SK-N-SH (cell line): ENCODE measurements at regions of chr1 and their contacts with region 1.

Region 1: DNA sequence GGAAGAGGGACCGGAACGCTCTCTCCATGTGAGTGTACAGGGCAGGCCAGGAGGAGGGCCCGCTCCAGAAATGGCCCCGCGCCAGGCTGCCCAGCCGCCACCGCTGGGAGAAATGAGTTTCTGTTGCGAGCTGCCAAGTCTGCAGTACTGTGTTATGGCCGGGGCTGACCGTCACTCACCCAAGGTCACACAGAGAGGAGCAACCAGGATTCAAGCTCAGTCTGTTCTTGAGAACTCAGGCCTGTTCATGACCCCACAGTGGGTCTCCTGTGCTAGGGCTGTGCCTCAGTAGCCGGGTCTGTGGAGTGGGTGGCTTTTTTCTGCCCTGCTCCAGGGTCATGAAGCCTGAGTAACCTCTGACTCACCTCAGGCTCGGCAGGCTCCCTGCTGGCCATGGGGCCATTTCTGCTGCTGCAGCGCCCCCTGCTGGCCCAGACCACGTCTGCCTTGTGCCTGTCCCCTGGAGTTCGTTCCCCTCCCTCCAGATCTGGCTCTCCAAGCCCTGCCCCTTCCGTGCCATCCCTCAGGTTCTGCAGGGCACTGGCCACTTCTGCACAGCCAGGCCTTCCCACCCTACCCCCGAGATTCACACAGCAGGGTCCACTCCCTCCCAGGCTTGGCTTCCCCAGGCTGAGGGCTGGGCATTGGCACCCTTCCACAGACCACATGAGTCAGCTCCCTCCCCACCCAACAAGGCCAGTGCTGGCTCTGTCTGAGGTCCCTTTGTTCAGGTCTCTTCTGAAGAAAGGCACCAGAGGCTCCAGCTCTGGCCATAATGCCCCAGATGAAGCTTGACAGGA is 51.8 kb downstream of the EDN2 start:
- DNase-seq: peak; percentile 90
- H3K4me3 ChIP-seq: peak overlapping the region; percentile 25 to 58; a peak in 3 of 4 replicates
- H3K27ac ChIP-seq: peak overlapping the region; percentile 85 to 88
- H3K4me1 ChIP-seq: peaks cover 36 to 65% of the 10 kb centered on the region in 2 experiments
- H3K27me3 ChIP-seq: no peaks in the 10 kb centered on the region
- CTCF ChIP-seq: peak; percentile 98
- EP300 ChIP-seq: peak in 1 of 2 experiments; percentile 75; a peak in 1 of 4 replicates
- RAD21 ChIP-seq: peak; percentile 89

Region 2: GRCh38 chr1:41282679-41283317 is 149.9 kb before region 1 on chr1:
- CTCF ChIA-PET with region 1: interaction called, 46 read pairs
- POLR2A ChIA-PET with region 1: no interaction called
- DNase-seq: peak; percentile 78
- H3K4me3 ChIP-seq: no peak overlapping the region; a peak in 1 of 4 replicates
- H3K27ac ChIP-seq: no peak overlapping the region
- H3K4me1 ChIP-seq: peaks cover 0 to 2% of the 10 kb centered on the region in 2 experiments; a peak in 1 of 4 replicates
- H3K27me3 ChIP-seq: no peaks in the 10 kb centered on the region; the same call in 1 of the 2 replicates
- CTCF ChIP-seq: peak; percentile 94
- EP300 ChIP-seq: no peak
- RAD21 ChIP-seq: peak; percentile 83

Region 3: DNA sequence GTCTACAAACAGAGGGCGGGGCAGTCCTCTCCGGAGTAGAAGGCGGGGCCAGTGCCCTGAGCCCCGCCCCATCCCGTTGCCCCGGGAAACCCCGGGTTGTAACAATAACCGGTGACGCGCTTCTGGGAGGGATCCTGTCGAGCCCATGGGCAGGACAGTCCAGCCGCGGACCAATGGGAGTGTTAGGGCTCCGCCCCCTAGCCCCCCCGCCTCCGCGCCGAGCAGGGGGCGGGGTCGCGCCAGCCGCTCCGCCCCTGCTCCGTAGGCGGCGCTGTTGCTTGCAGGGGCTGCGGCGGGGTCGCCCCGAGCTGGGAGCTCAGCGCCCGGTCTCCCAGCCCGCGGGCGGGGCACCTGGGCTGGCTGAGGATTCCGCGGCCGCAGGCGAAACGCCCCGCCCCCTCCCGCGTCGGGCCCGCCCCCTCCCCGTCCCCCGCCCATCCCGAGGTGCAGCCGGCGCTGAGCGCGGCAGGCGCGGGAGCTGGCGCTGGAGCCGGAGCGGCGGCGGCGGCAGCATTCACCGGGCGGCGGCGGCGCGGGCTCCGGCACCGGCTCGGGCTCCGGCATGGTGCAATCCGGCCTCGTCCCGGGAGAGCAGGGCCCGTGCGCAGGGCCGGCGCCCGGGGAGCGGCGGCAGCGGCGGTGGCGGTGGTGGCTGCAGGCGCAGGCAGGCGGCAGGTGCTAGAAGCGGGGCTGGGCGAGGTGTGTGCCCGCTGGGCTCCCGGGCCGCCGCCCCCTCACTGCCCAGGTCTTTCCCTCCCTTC is 71.5 kb before region 1 on chr1 and contains the start of gene FOXO6:
- CTCF ChIA-PET with region 1: interaction called, 35 read pairs
- POLR2A ChIA-PET with region 1: interaction called, 3 read pairs
- DNase-seq: peak; percentile 99
- H3K4me3 ChIP-seq: peak within 1 kb of the TSS; percentile 64 to 66
- H3K27ac ChIP-seq: peak within 1 kb of the TSS in 1 of 2 experiments; percentile 53; a peak in 1 of 4 replicates
- H3K4me1 ChIP-seq: peaks cover 33 to 68% of the 10 kb centered on the region in 2 experiments; a peak in 3 of 4 replicates
- H3K27me3 ChIP-seq: no peaks in the 10 kb centered on the region
- CTCF ChIP-seq: peak; percentile 38
- EP300 ChIP-seq: no peak
- RAD21 ChIP-seq: peak; percentile 42
- polyA plus RNA-seq, gene FOXO6: 0.11 and 0.35 TPM in 2 replicates

Region 4: GRCh38 chr1:41416552-41417334 is 15.9 kb before region 1 on chr1:
- CTCF ChIA-PET with region 1: interaction called, 74 read pairs
- POLR2A ChIA-PET with region 1: interaction called, 3 read pairs
- DNase-seq: peak; percentile 90
- H3K4me3 ChIP-seq: no peak overlapping the region; a peak in 1 of 4 replicates
- H3K27ac ChIP-seq: no peak overlapping the region
- H3K4me1 ChIP-seq: peaks cover 12 to 45% of the 10 kb centered on the region in 2 experiments; a peak in 3 of 4 replicates
- H3K27me3 ChIP-seq: no peaks in the 10 kb centered on the region
- CTCF ChIP-seq: peak; percentile 94
- EP300 ChIP-seq: no peak
- RAD21 ChIP-seq: peak; percentile 97

Region 5: GRCh38 chr1:41484372-41485241 is 51.9 kb after region 1 on chr1 and contains the start of gene EDN2:
- CTCF ChIA-PET with region 1: interaction called, 17 read pairs
- POLR2A ChIA-PET with region 1: no interaction called
- DNase-seq: peak; percentile 76
- H3K4me3 ChIP-seq: no peak within 1 kb of the TSS
- H3K27ac ChIP-seq: peak within 1 kb of the TSS; percentile 70 to 87
- H3K4me1 ChIP-seq: peaks cover 60 to 63% of the 10 kb centered on the region in 2 experiments
- H3K27me3 ChIP-seq: no peaks in the 10 kb centered on the region
- CTCF ChIP-seq: peak; percentile 30
- EP300 ChIP-seq: no peak
- RAD21 ChIP-seq: peak; percentile 28
- polyA plus RNA-seq, gene EDN2: 0.97 and 1.7 TPM in 2 replicates

Region 6: DNA sequence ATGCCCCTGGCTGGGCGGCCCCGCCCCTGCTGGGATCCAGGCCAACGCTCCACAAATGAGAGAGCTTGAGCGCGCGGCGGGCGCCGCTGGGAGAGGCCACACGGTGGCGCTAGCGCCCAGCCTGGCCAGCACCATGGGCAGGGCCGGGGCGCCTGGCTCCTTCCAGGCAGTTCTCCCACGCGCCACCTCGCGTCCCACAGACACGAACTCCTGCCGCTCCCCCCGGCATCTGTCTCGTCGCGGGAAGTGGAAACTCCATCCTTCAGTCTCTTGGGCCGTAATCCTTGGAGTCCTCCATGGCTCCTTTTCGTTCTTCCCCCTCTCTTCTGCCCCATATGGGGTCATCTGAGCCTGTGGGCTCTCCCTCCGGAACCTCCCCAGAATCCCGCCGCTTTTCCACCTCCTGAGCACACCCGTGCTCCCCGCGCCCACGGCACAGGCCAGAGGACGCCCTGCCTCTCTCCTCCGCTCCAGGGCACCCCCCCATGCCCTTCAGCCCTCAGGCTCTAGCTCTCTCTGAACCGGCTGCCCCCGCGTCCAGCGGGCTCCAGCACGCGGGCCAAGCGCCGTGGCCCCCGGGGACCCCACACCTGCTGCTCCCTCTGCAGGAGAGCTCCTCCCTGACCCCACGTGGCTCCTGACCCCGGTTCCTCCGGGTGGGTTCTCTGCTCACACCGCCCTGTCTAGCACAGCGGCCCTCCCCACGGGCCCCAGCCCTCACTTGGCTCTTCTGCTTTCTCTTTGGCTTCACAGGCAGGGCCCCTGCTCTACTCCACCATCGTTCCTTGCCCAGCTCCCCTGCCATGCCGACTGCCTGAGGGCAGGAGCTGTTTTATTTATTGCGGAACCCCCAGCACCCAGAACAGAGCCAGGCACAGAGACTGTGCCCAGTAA is 83.7 kb after region 1 on chr1:
- CTCF ChIA-PET with region 1: interaction called, 27 read pairs
- POLR2A ChIA-PET with region 1: no interaction called
- DNase-seq: peak; percentile 97
- H3K4me3 ChIP-seq: peak overlapping the region; percentile 21 to 44; a peak in 2 of 4 replicates
- H3K27ac ChIP-seq: no peak overlapping the region; a peak in 1 of 4 replicates
- H3K4me1 ChIP-seq: peaks cover 4 to 48% of the 10 kb centered on the region in 2 experiments; a peak in 3 of 4 replicates
- H3K27me3 ChIP-seq: no peaks in the 10 kb centered on the region
- CTCF ChIP-seq: peak; percentile 73
- EP300 ChIP-seq: peak in 1 of 2 experiments; percentile 9; a peak in 1 of 4 replicates
- RAD21 ChIP-seq: peak; percentile 76

Region 7: DNA sequence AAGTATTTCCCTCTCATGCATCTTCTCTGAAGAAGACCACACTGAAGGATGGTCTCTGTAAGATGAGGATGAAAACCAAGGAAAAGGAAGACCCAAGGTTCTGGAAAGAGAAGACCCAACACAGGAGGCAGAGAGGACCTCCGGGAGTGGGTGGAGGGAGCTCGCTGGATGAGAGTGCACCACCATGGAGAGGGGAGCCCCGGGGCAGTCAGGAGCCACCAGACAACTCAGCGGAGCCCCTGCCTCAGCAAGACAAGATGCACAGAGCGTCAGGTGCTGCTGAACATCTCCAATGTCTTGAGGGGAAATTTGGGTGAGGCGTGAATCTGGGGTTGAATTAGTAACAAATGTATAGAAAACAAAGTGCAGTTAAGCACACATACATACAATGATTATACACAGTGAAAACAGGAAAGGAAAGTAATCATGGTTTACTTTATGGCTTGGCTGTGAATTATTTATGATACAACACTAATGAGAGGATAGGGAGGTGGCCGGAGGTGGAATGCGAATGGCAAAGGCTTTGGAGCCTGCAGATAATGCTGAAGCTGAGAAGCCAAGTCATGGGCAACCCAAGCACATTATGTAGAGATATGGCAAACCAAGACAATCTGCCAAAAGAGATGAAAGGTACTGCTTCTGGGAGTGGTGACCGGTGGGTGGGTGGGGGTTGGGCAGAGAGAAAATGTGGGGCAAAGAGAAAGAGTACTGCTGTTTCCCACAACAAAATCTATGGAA is 132.2 kb after region 1 on chr1:
- CTCF ChIA-PET with region 1: no interaction called
- POLR2A ChIA-PET with region 1: no interaction called
- DNase-seq: no peak
- H3K4me3 ChIP-seq: no peak overlapping the region
- H3K27ac ChIP-seq: no peak overlapping the region
- H3K4me1 ChIP-seq: no peaks in the 10 kb centered on the region
- H3K27me3 ChIP-seq: no peaks in the 10 kb centered on the region
- CTCF ChIP-seq: no peak
- EP300 ChIP-seq: no peak
- RAD21 ChIP-seq: no peak